OCI-LY7 (cell line): ENCODE measurements at regions of chr7 and their contacts with region 1.

Region 1: GRCh38 chr7:23157679-23158078 is 24.2 kb upstream of the NUP42 start:
- DNase-seq: no peak
- H3K4me3 ChIP-seq: no peak overlapping the region
- H3K27ac ChIP-seq: no peak overlapping the region
- H3K4me1 ChIP-seq: no peaks in the 10 kb centered on the region
- CTCF ChIP-seq: no peak

Region 2: GRCh38 chr7:22920672-22921071 is 237.0 kb before region 1 on chr7:
- CTCF ChIA-PET with region 1: no interaction called
- POLR2A ChIA-PET with region 1: no interaction called
- intact Hi-C with region 1: no loop called
- DNase-seq: no peak
- H3K4me3 ChIP-seq: no peak overlapping the region
- H3K27ac ChIP-seq: no peak overlapping the region
- H3K4me1 ChIP-seq: no peaks in the 10 kb centered on the region
- CTCF ChIP-seq: no peak

Region 3: GRCh38 chr7:23168111-23168885 is 10.6 kb after region 1 on chr7:
- CTCF ChIA-PET with region 1: no interaction called
- POLR2A ChIA-PET with region 1: interaction called, 10 read pairs
- intact Hi-C with region 1: no loop called
- DNase-seq: no peak
- H3K4me3 ChIP-seq: no peak overlapping the region
- H3K27ac ChIP-seq: no peak overlapping the region
- H3K4me1 ChIP-seq: no peaks in the 10 kb centered on the region
- CTCF ChIP-seq: no peak